ENCODE measurements at regions of chr6 and their contacts with region 1.

Region 1: GRCh38 chr6:100322886-100323285 is 141.8 kb downstream of the SIM1 start:
- DNase-seq: no peak
- H3K4me3 Mint-ChIP-seq: no peak overlapping the region
- H3K27ac Mint-ChIP-seq: no peak overlapping the region
- H3K4me1 Mint-ChIP-seq: no peaks in the 10 kb centered on the region
- H3K27me3 Mint-ChIP-seq: no peaks in the 10 kb centered on the region
- CTCF ChIP-seq: no peak

Region 2: DNA sequence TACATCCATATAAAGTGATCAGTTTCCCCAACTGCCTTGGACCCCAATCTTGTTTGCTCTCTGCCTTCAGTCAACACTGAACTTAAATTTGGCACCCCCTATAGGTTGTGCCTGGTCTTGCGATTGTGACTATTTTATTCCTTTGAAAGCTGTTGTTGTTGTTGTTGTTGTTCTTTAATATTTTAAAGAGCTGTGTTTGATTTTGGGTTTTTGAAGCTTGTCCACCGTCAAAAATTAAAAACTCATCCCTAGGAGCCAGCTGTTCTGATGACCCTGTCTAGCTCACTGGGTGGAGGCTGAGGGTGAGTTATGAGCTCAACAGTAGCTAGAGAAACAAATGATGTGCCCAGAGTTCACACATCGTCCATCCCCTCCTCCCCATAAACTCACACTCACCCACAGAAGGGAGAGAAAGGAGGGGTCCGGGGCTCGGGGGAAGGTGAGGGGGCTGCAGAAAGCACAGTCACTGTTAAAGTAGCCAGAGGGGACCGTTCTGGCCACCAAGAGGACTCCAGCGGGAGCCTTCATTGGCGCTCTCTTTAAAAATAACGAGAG is 137.8 kb after region 1 on chr6:
- CTCF ChIA-PET with region 1: no interaction called
- intact Hi-C with region 1: no loop called
- DNase-seq: peak; percentile 23
- H3K4me3 Mint-ChIP-seq: peak overlapping the region; percentile 86
- H3K27ac Mint-ChIP-seq: no peak overlapping the region
- H3K4me1 Mint-ChIP-seq: peaks cover 8% of the 10 kb centered on the region
- H3K27me3 Mint-ChIP-seq: no peaks in the 10 kb centered on the region
- CTCF ChIP-seq: peak; percentile 71

Region 3: GRCh38 chr6:100479179-100480035 is 156.5 kb after region 1 on chr6:
- CTCF ChIA-PET with region 1: no interaction called
- intact Hi-C with region 1: loop called (anchors 1 kb)
- DNase-seq: peak; percentile 30
- H3K4me3 Mint-ChIP-seq: no peak overlapping the region
- H3K27ac Mint-ChIP-seq: no peak overlapping the region
- H3K4me1 Mint-ChIP-seq: peaks cover 40% of the 10 kb centered on the region
- H3K27me3 Mint-ChIP-seq: no peaks in the 10 kb centered on the region
- CTCF ChIP-seq: peak; percentile 42

Region 4: GRCh38 chr6:100573167-100573566 is 250.3 kb after region 1 on chr6:
- CTCF ChIA-PET with region 1: no interaction called
- intact Hi-C with region 1: loop called (anchors 1 kb)
- DNase-seq: peak; percentile 37
- H3K4me3 Mint-ChIP-seq: no peak overlapping the region
- H3K27ac Mint-ChIP-seq: no peak overlapping the region
- H3K4me1 Mint-ChIP-seq: no peaks in the 10 kb centered on the region
- H3K27me3 Mint-ChIP-seq: no peaks in the 10 kb centered on the region
- CTCF ChIP-seq: peak; percentile 48